ENCODE measurements at regions of chr3 and their contacts with region 1.

Region 1: DNA sequence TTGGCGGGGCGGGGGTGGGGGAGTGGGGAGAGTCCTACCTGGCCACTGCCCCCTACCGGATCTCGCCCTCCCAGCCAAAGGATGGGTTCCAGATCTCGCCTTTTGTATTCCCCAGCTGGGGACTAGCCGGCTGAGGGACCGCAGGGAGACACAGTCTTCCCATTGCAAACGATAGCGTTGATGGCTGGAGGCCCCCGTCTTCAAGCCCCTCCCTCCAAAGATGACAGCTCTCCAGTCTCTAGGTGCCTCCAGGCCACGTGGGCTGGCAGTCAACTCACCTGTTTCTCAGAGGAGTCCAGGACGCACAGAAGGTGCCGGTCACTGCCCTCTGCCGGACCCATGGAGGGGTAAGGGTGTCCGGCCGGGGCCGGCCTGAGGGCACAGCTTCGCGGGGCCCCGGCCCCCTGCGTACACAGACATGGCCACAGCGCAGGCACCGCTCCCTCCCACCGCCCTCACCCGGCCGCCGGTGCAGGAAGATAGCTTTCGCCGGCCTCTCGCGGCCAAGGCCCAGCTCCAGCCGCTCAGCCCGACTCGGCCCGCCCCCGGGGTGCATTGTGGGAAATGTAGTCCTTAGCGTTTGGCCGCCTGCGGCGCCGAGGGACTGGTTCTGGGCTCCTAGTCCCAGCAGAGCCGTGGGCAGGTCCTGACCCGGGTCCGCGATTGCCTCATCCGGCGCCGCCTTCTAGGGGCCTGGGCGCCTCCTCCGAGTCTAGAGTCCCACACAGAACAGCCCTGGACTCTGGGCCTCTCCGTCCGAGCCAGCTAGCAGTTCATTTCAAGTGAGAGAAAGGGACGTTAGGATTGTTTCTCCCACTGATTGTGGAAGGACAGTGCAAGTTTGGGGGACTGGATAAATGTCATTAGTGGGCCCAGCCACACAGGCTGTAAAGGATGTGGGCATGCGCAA is at the start of gene MON1A:
- DNase-seq: peak in 1 of 2 experiments; percentile 100
- H3K4me3 ChIP-seq: peak within 1 kb of the TSS; percentile 61 to 87 (median 80)
- H3K27ac ChIP-seq: peak within 1 kb of the TSS; percentile 39; the same call in 1 of the 2 replicates
- H3K4me1 ChIP-seq: peaks cover 2 to 9% (median 5%) of the 10 kb centered on the region in 4 experiments; a peak in 5 of 7 replicates
- H3K27me3 ChIP-seq: no peaks in the 10 kb centered on the region
- CTCF ChIP-seq: peak; percentile 20 to 48 (median 41); a peak in 3 of 4 replicates
- EP300 ChIP-seq: no peak
- POLR2A ChIP-seq: peak in 1 of 2 experiments; percentile 57; a peak in 2 of 3 replicates
- RAD21 ChIP-seq: no peak; a peak in 1 of 4 replicates
- total RNA-seq, gene MON1A: 9.8 and 10.3 TPM in 2 replicates

Region 2: DNA sequence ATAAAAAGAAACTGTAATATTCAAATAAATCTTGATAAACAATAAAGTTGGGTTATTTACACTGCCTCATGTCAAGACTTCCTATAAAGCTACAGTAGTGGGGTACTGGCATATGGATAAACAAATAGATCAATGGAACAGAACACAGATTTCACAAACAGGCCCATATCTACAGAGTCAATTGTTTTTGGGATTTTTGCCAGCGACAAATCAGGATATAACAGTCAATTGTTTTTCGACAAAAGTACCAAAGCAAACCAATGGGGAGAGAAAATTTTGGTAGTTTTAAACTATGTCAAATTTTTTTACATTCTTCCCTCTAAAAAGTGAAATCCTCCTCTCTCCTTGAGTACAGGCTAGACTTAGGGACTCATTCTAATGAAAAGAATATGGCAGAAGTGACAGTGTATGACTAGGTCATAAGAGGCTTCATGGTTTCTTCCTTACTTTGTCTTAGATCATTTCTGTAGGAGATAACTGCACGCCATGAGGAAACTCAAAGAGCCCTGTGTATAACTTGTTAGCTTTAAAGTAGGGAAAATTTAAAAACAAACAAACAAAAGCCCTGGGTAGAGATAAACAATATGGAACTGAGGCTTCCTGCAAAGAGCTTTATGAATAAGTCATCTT is 160.2 kb before region 1 on chr3:
- CTCF ChIA-PET with region 1: no interaction called
- POLR2A ChIA-PET with region 1: no interaction called
- DNase-seq: no peak
- H3K4me3 ChIP-seq: no peak overlapping the region
- H3K27ac ChIP-seq: no peak overlapping the region
- H3K4me1 ChIP-seq: no peaks in the 10 kb centered on the region
- H3K27me3 ChIP-seq: no peaks in the 10 kb centered on the region
- CTCF ChIP-seq: no peak
- EP300 ChIP-seq: no peak
- POLR2A ChIP-seq: no peak
- RAD21 ChIP-seq: no peak

Region 3: GRCh38 chr3:49906004-49906743 is 23.4 kb before region 1 on chr3:
- CTCF ChIA-PET with region 1: interaction called, 36 read pairs
- POLR2A ChIA-PET with region 1: interaction called, 6 read pairs
- DNase-seq: peak in 1 of 2 experiments; percentile 77
- H3K4me3 ChIP-seq: peak overlapping the region in 1 of 4 experiments; percentile 10; a peak in 1 of 8 replicates
- H3K27ac ChIP-seq: no peak overlapping the region
- H3K4me1 ChIP-seq: peaks cover 2 to 43% (median 26%) of the 10 kb centered on the region in 4 experiments
- H3K27me3 ChIP-seq: peaks cover 0 to 20% (median 16%) of the 10 kb centered on the region in 4 experiments; a peak in 5 of 7 replicates
- CTCF ChIP-seq: peak in 2 of 3 experiments; percentile 89 to 90; a peak in 3 of 4 replicates
- EP300 ChIP-seq: no peak
- POLR2A ChIP-seq: no peak
- RAD21 ChIP-seq: peak; percentile 80 to 85

Region 4: GRCh38 chr3:49939858-49940666 is 10.5 kb after region 1 on chr3 and contains the start of gene RBM6:
- CTCF ChIA-PET with region 1: interaction called, 21 read pairs
- POLR2A ChIA-PET with region 1: interaction called, 32 read pairs
- DNase-seq: peak; percentile 92 to 94
- H3K4me3 ChIP-seq: peak within 1 kb of the TSS; percentile 97 to 100 (median 98)
- H3K27ac ChIP-seq: peak within 1 kb of the TSS; percentile 68
- H3K4me1 ChIP-seq: peaks cover 0 to 4% (median 0%) of the 10 kb centered on the region in 4 experiments; a peak in 2 of 7 replicates
- H3K27me3 ChIP-seq: no peaks in the 10 kb centered on the region
- CTCF ChIP-seq: no peak
- EP300 ChIP-seq: no peak
- POLR2A ChIP-seq: peak; percentile 66 to 80
- RAD21 ChIP-seq: no peak
- total RNA-seq, gene RBM6: 80.1 and 81.2 TPM in 2 replicates

Region 5: GRCh38 chr3:50095352-50095998 is 165.9 kb after region 1 on chr3:
- CTCF ChIA-PET with region 1: no interaction called
- POLR2A ChIA-PET with region 1: no interaction called
- DNase-seq: no peak
- H3K4me3 ChIP-seq: no peak overlapping the region
- H3K27ac ChIP-seq: no peak overlapping the region
- H3K4me1 ChIP-seq: no peaks in the 10 kb centered on the region
- H3K27me3 ChIP-seq: no peaks in the 10 kb centered on the region
- CTCF ChIP-seq: no peak
- EP300 ChIP-seq: no peak
- POLR2A ChIP-seq: no peak
- RAD21 ChIP-seq: no peak

Measured in H1 (cell line).